ENCODE measurements at regions of chr5 and their contacts with region 1.

Region 1: DNA sequence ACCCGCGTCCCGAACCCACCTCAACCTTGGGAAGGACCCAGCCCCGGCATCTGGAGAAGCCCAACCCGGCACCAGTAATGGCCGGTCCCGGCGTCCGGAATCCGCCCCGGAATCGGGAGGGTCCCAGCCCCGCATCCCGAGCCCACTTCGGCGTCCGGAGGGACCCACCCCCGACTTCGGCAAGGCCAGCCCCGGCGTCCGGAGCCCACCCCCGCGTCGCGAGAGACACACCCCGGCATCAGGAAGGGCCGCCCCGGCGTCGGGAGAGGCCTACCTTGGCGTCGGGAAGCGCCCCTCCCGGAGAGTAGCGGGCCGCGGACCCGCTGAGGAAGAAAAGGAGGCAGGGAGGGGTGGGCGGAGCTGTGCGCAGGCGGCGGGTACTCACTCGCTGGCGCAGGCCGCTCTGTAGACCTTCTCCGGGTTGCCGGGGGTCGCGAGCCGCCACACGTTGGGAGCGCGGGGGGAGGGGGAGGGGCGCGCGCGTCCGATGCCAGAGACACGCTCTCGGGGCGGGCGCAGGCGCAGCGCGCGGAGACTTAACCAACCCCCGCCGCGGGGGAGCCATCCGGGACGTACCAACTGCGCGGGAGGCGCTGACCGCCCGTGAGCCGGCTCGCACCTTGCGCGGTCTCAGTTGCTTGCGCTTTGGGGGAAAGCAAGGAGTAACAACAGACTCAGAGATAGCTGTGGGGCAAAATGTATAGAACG is at the start of gene UIMC1:
- DNase-seq: peak; percentile 91
- H3K4me3 Mint-ChIP-seq: peak within 1 kb of the TSS; percentile 96
- H3K27ac Mint-ChIP-seq: peak within 1 kb of the TSS; percentile 95
- H3K4me1 Mint-ChIP-seq: peaks cover 22% of the 10 kb centered on the region
- H3K27me3 Mint-ChIP-seq: no peaks in the 10 kb centered on the region
- total RNA-seq, gene UIMC1: 57.0 and 70.6 TPM in 2 replicates

Region 2: DNA sequence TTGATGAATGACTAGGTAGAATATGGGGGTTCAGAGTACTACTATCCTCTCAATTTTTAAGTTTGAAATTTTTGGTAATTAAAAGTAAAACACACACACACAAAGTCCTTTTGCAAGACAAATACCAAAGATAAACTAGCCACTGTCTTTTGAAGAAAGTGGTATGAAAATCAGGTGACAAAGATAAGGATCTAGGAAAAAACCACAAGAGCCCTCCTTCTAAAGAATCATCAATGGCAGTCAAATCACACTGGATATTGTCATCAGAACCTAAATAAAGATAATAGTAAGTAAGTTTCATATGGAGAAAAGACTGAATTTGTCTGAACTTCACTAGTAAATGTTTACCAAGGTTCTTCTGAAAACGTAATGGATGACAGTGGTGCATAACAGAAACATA is 76.8 kb before region 1 on chr5:
- intact Hi-C with region 1: no loop called
- DNase-seq: no peak
- H3K4me3 Mint-ChIP-seq: no peak overlapping the region
- H3K27ac Mint-ChIP-seq: no peak overlapping the region
- H3K4me1 Mint-ChIP-seq: peaks cover 1% of the 10 kb centered on the region
- H3K27me3 Mint-ChIP-seq: no peaks in the 10 kb centered on the region

Region 3: DNA sequence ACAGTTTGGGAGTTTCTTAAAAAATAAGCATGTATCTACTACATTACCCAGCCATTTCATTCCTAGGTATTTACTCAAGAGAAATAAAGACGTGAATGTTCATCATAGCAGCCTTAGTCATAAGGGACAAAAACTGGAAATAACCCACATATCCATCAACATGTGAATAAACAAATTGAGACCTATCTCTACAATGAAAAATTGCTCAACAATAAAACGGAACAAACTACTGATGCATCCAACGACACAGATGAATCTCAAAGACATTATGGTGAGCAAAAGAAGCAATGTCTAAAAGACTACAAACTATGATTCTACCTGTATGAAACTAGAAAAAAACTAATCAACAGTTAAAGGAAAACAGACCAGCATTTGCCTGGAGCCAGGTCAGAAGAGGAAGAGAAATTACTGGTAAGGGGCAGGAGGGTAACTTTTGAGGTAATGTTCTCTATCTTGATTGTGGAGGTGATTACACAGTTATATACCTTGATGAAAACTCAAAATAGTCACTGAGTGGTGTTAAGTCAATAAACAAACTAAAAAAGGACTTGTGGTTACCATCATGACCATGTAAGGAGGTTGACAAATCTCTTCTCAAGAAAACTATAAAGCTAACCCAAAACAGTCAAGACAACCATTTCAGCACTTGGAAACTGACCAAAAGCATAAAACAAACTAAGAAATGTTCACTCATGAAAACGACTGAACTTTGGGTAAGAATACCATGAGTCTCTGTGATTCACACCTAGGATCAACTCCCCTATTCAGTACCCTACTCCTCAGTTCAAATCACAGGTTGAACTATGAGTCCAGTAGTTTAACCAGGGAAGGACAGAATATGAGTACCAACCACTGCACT is 10.3 kb before region 1 on chr5:
- intact Hi-C with region 1: loop called (anchors 1 kb)
- DNase-seq: no peak
- H3K4me3 Mint-ChIP-seq: no peak overlapping the region
- H3K27ac Mint-ChIP-seq: peak overlapping the region; percentile 69
- H3K4me1 Mint-ChIP-seq: peaks cover 43% of the 10 kb centered on the region
- H3K27me3 Mint-ChIP-seq: no peaks in the 10 kb centered on the region

Region 4: GRCh38 chr5:177311723-177312648 is 305.6 kb after region 1 on chr5 and contains the start of gene MXD3:
- intact Hi-C with region 1: loop called (anchors 5 kb)
- DNase-seq: peak; percentile 96
- H3K4me3 Mint-ChIP-seq: peak within 1 kb of the TSS; percentile 89
- H3K27ac Mint-ChIP-seq: peak within 1 kb of the TSS; percentile 85
- H3K4me1 Mint-ChIP-seq: peaks cover 44% of the 10 kb centered on the region
- H3K27me3 Mint-ChIP-seq: no peaks in the 10 kb centered on the region
- total RNA-seq, gene MXD3: 9.6 and 11.8 TPM in 2 replicates

Measured in activated T-helper 1 cell treated with anti-CD3 and anti-CD28 coated beads, Interleukin-12 subunit alpha, Interleukin-12 subunit beta, Interleukin-2, Interleukin-4 antibody, amounts not matched to agents 30 ng/mL and 10 ng/mL and 1 ng/mL, durations not matched to agents 14 hours and 24 hours and 36 hours (primary cell).